ENCODE measurements at regions of chr20 and their contacts with region 1.

Region 1: DNA sequence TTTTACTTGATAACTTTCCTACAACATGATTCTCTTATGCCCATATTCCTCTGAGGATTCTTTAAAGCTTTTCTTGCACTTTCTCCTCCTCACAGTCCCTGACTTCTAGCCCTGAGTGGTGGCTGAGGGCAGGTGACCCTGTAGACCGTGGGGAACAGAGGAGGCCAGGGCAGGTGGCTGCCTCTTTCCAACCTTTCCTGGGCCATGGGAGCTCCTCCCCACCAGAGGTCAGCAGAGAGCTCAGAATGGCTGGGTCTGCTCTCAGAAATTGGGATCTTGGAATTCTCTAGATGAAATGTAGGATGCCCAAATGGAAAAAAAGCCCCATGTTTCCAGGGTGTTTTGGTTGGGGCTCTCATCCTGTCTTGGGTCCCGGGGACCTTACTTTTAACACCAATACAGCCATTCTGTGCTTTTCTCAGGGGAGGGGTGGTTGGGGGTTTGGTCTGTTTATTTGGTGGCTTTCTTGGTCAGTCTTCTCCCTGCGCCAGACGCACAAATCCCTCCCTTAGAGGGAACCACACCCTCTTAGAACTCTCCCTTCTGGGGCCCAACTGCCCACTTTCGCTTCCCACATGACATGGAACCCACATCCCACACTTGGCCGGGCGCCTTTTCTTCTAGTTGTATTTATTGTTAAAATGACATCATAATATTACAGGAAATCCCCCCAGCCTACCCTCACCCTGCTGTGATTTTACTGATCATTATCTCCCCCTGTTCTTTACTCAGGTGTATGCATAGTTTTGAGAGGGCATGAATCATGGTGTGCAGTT is 17.9 kb downstream of the GNAS start:
- DNase-seq: peak; percentile 67
- CTCF ChIP-seq: peak; percentile 80

Region 2: GRCh38 chr20:58515233-58516184 is 354.9 kb before region 1 on chr20 and contains the start of gene APCDD1L:
- in situ Hi-C with region 1: no loop called
- DNase-seq: no peak
- CTCF ChIP-seq: no peak

Region 3: GRCh38 chr20:59074445-59074844 is 204.0 kb after region 1 on chr20:
- in situ Hi-C with region 1: loop called (anchors 10 kb)
- DNase-seq: no peak
- CTCF ChIP-seq: no peak

Region 4: GRCh38 chr20:59207742-59208357 is 337.4 kb after region 1 on chr20:
- in situ Hi-C with region 1: loop called (anchors 10 kb)
- DNase-seq: peak; percentile 88
- CTCF ChIP-seq: peak; percentile 71

Region 5: GRCh38 chr20:59222253-59223181 is 352.1 kb after region 1 on chr20:
- in situ Hi-C with region 1: loop called (anchors 5 kb)
- DNase-seq: peak; percentile 91
- CTCF ChIP-seq: peak; percentile 90